IMR-90 (cell line): ENCODE measurements at regions of chr11 and their contacts with region 1.

Region 1: GRCh38 chr11:132114185-132114584 is 743.8 kb downstream of the NTM start:
- DNase-seq: peak; percentile 25
- ATAC-seq: no peak
- H3K4me3 ChIP-seq: no peak overlapping the region
- H3K27ac ChIP-seq: no peak overlapping the region
- H3K4me1 ChIP-seq: peaks cover 7% of the 10 kb centered on the region
- H3K27me3 ChIP-seq: no peaks in the 10 kb centered on the region
- CTCF ChIP-seq: peak; percentile 29; the same call in 1 of the 2 replicates
- POLR2A ChIP-seq: no peak
- RAD21 ChIP-seq: peak; percentile 28; the same call in 1 of the 2 replicates

Region 2: DNA sequence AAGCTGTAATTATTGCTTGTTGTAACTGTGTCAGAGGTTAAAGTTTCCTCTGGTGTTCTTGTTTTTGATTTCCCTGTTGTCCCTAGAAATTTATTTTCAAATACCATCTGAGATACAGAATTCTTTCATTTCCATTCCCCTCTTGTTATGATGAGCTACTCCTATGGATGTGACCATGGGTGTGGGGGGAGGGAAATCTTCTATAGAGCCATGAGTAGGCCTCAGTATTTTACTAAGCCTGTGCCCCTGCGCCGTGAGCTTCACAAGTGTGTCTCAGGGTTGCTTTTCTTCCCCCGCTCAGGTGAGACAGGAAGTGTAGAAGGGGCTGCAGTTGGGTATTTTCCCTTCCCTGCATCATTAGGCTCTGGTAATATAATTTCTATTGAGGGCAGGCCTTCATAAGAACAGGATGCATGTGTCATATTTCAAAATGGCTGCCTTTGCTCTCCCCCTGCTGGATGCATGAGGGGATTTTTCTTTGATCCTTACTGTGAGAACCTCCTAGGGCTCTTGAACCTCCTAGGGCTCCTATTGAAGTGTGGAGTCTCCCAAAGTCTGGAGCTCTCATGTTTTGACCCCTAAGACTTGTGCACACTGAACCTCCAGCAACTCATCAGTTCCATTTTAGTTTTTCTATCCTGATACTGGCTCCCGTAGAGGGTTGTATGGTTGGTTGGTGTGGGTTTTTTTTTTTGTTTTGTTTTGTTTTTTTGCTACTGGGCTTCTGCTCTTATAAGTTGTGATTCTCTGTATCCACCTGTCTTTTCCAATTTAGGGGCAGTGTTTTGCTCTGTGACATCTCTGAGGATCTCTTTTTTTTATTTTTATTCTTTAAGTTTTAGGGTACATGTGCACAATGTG is 85.6 kb before region 1 on chr11:
- CTCF ChIA-PET with region 1: interaction called, 3 read pairs
- POLR2A ChIA-PET with region 1: no interaction called
- dilution Hi-C with region 1: no loop called
- in situ Hi-C with region 1: no loop called
- intact Hi-C with region 1: loop called (anchors 5 kb)
- DNase-seq: peak; percentile 73
- ATAC-seq: 0 out of 2 replicates have a peak, but pooled peaks have one; percentile 27
- H3K4me3 ChIP-seq: no peak overlapping the region
- H3K27ac ChIP-seq: no peak overlapping the region
- H3K4me1 ChIP-seq: peaks cover 23% of the 10 kb centered on the region
- H3K27me3 ChIP-seq: no peaks in the 10 kb centered on the region
- CTCF ChIP-seq: peak; percentile 61
- POLR2A ChIP-seq: no peak
- RAD21 ChIP-seq: peak; percentile 47

Region 3: DNA sequence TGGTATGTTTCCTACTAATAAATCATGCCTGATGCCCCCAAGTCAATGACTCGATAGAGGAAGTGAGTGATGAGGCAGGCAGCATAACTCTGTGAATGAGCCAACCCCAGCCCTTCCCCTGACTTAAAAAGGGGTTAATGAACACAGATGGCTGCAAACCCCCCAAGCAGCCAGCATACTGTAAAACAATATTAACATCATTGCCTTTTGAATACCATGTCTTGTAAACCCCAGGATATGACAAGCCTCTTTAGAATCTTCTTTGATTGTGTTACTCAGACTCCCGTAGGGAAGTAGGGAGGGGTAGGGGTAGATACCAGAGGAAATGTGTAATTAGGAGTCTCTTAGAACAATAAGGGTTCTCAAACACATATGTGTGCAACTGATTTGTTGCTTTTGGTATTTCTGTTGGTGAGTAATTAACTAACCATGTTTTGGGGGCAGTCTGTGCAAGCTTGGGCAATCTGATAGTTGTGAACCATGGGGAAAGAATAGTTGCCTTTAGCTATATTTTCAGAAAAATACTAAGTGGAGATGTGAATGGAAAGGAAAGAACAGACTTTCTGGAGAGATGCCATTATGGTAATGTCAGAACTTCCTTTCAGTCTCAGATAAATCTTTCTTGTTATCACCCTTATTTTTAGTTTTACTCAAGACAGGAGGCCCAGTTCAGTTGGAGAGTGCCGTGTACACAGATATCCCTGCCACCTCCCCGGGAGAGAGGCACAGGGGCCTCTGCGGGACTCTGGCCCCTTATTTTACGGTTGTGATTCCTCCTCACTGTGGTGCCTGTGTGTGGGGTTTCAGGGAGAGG is 41.9 kb before region 1 on chr11:
- CTCF ChIA-PET with region 1: interaction called, 3 read pairs
- POLR2A ChIA-PET with region 1: interaction called, 3 read pairs
- dilution Hi-C with region 1: no loop called
- in situ Hi-C with region 1: no loop called
- intact Hi-C with region 1: loop called (anchors 1 kb)
- DNase-seq: peak; percentile 99
- ATAC-seq: peak; percentile 88
- H3K4me3 ChIP-seq: no peak overlapping the region
- H3K27ac ChIP-seq: peak overlapping the region; percentile 91
- H3K4me1 ChIP-seq: peaks cover 29% of the 10 kb centered on the region
- H3K27me3 ChIP-seq: no peaks in the 10 kb centered on the region
- CTCF ChIP-seq: no peak
- POLR2A ChIP-seq: peak; percentile 23; the same call in 1 of the 2 replicates
- RAD21 ChIP-seq: no peak